ENCODE measurements at regions of chr7 and their contacts with region 1.

Region 1: GRCh38 chr7:129825496-129826267 is 127.1 kb downstream of the UBE2H start:
- DNase-seq: peak; percentile 79 to 85 (median 82)
- H3K4me3 ChIP-seq: peak overlapping the region in 1 of 2 donors; percentile 52
- H3K4me3 Mint-ChIP-seq: peak overlapping the region; percentile 83 to 92 (median 90)
- H3K27ac ChIP-seq: peak overlapping the region; percentile 40
- H3K27ac Mint-ChIP-seq: peak overlapping the region in 4 of 7 donors; percentile 42 to 80 (median 60)
- H3K4me1 ChIP-seq: peaks cover 22% of the 10 kb centered on the region
- H3K4me1 Mint-ChIP-seq: peaks cover 7 to 29% (median 17%) of the 10 kb centered on the region in 4 donors
- H3K27me3 ChIP-seq: no peaks in the 10 kb centered on the region
- H3K27me3 Mint-ChIP-seq: no peaks in the 10 kb centered on the region

Region 2: DNA sequence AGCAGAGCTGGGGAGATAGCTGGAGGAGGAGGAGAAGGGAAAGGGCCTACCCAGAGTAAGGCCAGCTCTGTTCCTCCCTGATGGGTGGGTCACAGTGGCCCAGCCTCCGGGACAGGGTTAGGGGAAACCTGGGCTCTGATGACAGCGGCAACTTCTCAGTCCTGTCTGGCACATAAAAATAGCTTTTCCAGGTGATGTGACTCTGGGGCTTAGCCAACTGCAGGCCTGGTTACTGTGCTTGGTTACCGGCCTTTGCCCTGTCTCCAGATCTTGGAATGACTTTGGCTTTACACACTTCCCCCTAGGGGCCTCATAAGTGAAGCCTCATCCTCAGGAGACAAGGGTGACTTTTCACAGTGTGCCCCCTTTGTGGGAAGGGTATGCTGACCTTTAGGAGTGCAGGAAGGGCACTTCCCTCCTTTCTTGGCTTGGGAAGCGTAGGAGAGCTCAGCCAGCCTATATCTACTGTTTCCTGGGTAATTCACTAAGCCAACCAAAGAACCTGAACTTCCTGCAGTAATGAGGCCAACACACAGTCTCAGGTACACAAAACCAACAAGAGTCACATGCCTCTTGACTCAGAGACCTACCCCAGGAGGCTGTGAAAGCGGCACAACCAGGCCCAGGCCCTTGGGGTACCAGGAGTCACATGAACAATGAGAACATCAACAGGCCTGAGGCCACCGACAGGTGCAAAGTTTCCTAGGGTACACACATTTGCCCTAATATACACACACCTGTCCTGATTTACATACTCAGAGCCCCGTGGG is 1381.7 kb before region 1 on chr7:
- CTCF ChIA-PET with region 1: no interaction called
- POLR2A ChIA-PET with region 1: no interaction called
- intact Hi-C with region 1: no loop called
- DNase-seq: peak in 1 of 5 donors; percentile 35
- H3K4me3 ChIP-seq: no peak overlapping the region
- H3K4me3 Mint-ChIP-seq: no peak overlapping the region
- H3K27ac ChIP-seq: no peak overlapping the region
- H3K27ac Mint-ChIP-seq: no peak overlapping the region
- H3K4me1 ChIP-seq: no peaks in the 10 kb centered on the region
- H3K4me1 Mint-ChIP-seq: peaks cover 0 to 3% (median 0%) of the 10 kb centered on the region in 4 donors
- H3K27me3 ChIP-seq: no peaks in the 10 kb centered on the region
- H3K27me3 Mint-ChIP-seq: no peaks in the 10 kb centered on the region

Region 3: DNA sequence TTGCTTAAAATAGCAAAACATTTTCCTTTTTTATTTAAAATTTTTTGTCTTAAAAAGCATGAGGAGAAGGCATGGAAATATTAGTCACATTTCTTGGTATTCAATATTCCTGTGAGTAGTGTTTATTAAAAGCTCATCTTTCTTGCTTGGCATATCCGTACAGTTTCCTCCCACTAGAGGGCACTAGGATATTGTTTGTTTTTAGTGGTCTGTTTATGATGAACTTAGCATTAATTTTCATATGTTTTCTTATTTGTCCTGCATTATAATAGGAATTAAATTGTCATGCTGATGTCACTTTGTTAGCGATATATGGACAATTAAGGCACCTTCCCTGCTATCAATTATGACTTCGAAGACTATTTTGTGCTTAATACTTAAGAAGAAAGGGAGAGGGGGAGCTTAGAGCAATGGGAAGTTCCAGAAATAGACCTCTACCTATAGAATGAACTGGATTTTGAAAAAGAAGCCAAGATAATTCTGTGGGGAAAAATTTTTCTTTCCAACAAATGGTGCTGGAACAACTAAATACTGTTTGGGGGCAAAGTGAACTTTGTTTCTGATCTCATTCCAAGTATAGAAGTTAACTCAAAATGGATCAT is 482.5 kb before region 1 on chr7:
- CTCF ChIA-PET with region 1: interaction called, 9 read pairs
- POLR2A ChIA-PET with region 1: no interaction called
- intact Hi-C with region 1: loop called (anchors 1 kb)
- DNase-seq: peak in 4 of 5 donors; percentile 17 to 44 (median 34)
- H3K4me3 ChIP-seq: no peak overlapping the region
- H3K4me3 Mint-ChIP-seq: no peak overlapping the region
- H3K27ac ChIP-seq: no peak overlapping the region
- H3K27ac Mint-ChIP-seq: no peak overlapping the region
- H3K4me1 ChIP-seq: no peaks in the 10 kb centered on the region
- H3K4me1 Mint-ChIP-seq: peaks cover 9 to 12% (median 10%) of the 10 kb centered on the region in 4 donors
- H3K27me3 ChIP-seq: no peaks in the 10 kb centered on the region
- H3K27me3 Mint-ChIP-seq: no peaks in the 10 kb centered on the region

Region 4: GRCh38 chr7:129611246-129612111 is 214.2 kb before region 1 on chr7 and contains the start of gene NRF1:
- CTCF ChIA-PET with region 1: interaction called, 4 read pairs
- POLR2A ChIA-PET with region 1: interaction called, 7 read pairs
- intact Hi-C with region 1: loop called (anchors 1 kb)
- DNase-seq: peak; percentile 90 to 93 (median 93)
- H3K4me3 ChIP-seq: peak within 1 kb of the TSS; percentile 95 to 98
- H3K4me3 Mint-ChIP-seq: peak within 1 kb of the TSS; percentile 94 to 99 (median 98)
- H3K27ac ChIP-seq: peak within 1 kb of the TSS; percentile 79
- H3K27ac Mint-ChIP-seq: peak within 1 kb of the TSS; percentile 92 to 98 (median 97)
- H3K4me1 ChIP-seq: peaks cover 45% of the 10 kb centered on the region
- H3K4me1 Mint-ChIP-seq: peaks cover 38 to 69% (median 55%) of the 10 kb centered on the region in 4 donors
- H3K27me3 ChIP-seq: no peaks in the 10 kb centered on the region
- H3K27me3 Mint-ChIP-seq: no peaks in the 10 kb centered on the region
- total RNA-seq, gene NRF1: 38.1 to 40.0 TPM

Region 5: DNA sequence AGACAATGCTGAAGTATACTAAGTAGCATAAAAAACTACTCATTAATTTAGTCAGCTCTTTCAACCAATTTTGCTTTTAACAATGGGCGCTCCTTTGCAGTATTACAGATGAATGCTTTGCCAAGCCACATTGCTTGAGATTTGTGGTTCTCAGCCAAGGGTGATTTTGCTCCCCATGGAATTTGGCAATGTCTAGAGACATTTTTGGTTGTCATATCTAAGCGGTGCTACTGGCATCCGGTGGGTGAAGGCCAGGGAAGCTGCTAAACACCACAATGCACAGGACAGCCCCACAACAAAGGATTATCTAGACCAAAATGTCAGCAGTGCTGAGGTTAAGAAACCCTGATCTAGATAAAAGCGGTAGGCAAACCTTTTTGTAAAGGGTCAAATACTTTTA is 15.1 kb after region 1 on chr7:
- CTCF ChIA-PET with region 1: interaction called, 33 read pairs
- POLR2A ChIA-PET with region 1: no interaction called
- intact Hi-C with region 1: no loop called
- DNase-seq: no peak
- H3K4me3 ChIP-seq: no peak overlapping the region
- H3K4me3 Mint-ChIP-seq: peak overlapping the region in 2 of 8 donors; percentile 30 to 33
- H3K27ac ChIP-seq: no peak overlapping the region
- H3K27ac Mint-ChIP-seq: peak overlapping the region in 4 of 7 donors; percentile 19 to 82 (median 52)
- H3K4me1 ChIP-seq: peaks cover 43% of the 10 kb centered on the region
- H3K4me1 Mint-ChIP-seq: peaks cover 34 to 52% (median 41%) of the 10 kb centered on the region in 4 donors
- H3K27me3 ChIP-seq: no peaks in the 10 kb centered on the region
- H3K27me3 Mint-ChIP-seq: no peaks in the 10 kb centered on the region

Region 6: DNA sequence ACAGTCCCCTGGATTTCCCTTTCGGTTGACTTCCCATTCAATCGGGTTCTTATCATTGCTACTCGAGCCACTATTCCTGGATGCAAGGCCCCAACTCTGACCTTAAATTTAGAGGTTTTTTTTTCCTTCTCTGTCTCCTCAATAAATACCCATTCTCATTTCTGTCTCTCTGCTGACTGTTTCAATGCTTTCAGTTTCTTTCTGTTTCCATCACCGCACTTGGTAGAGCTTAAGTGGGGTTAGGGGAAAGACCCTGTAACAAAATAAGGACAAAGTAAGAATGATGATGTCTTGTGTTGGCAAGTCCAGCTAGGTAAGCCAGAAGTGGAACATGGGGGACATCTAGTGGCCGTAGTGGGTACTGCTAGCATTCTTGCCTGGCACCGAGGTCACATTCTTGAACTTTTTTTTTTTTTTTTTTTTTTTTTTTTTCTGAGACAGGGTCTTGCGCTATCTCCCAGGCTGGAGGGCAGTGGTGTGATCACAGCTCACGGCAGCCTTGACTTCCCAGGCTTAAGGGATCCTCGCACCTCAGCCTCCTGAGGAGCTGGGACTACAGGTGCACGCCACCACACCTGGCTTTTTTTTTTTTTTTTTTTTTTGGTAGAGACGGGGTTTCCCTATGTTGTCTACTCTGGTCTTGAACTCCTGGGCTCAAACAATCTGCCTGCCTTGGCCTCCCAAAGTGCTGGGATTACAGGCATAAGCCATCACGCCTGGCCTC is 185.2 kb after region 1 on chr7:
- CTCF ChIA-PET with region 1: interaction called, 116 read pairs
- POLR2A ChIA-PET with region 1: interaction called, 4 read pairs
- intact Hi-C with region 1: loop called (anchors 1 kb)
- DNase-seq: peak; percentile 79 to 83 (median 80)
- H3K4me3 ChIP-seq: no peak overlapping the region
- H3K4me3 Mint-ChIP-seq: no peak overlapping the region
- H3K27ac ChIP-seq: no peak overlapping the region
- H3K27ac Mint-ChIP-seq: peak overlapping the region in 3 of 7 donors; percentile 62 to 74 (median 65)
- H3K4me1 ChIP-seq: no peaks in the 10 kb centered on the region
- H3K4me1 Mint-ChIP-seq: peaks cover 0 to 4% (median 2%) of the 10 kb centered on the region in 4 donors
- H3K27me3 ChIP-seq: no peaks in the 10 kb centered on the region
- H3K27me3 Mint-ChIP-seq: no peaks in the 10 kb centered on the region